Dorsolateral prefrontal cortex (tissue), 120 donors: ENCODE measurements at regions of chr1 and their contacts with region 1.

Region 1: GRCh38 chr1:116139592-116140134 is 28.5 kb downstream of the MAB21L3 start:
- DNase-seq: no peak
- H3K4me3 ChIP-seq: peak overlapping the region in 8 of 59 donors; percentile 13 to 61 (median 40)
- H3K27ac ChIP-seq: peak overlapping the region in 8 of 59 donors; percentile 18 to 79 (median 53)
- H3K27me3 ChIP-seq: no peaks in the 10 kb centered on the region
- CTCF ChIP-seq: no peak

Region 2: DNA sequence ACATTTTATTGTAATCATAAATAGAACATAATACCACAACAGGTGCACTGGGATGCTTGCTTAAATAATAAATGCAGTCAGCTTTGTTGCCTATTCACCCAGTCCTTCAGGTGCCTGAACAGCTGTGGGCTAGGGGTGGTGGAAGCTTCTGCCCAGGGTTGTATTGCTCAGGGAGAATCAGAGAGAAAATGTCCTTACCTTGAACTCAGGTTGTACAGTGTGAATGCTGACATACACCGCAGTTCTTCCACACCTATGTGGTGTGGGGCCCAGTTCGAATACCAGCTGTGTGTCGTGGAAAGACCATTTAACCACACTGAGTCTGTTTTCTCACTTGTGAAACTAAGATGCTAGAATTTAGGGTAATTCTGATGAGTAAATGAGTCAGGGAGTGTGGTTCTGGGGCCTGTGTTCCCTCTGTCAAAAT is 117.7 kb after region 1 on chr1:
- intact Hi-C with region 1: no loop called
- DNase-seq: no peak
- H3K4me3 ChIP-seq: no peak overlapping the region
- H3K27ac ChIP-seq: no peak overlapping the region
- H3K27me3 ChIP-seq: no peaks in the 10 kb centered on the region
- CTCF ChIP-seq: no peak

Region 3: DNA sequence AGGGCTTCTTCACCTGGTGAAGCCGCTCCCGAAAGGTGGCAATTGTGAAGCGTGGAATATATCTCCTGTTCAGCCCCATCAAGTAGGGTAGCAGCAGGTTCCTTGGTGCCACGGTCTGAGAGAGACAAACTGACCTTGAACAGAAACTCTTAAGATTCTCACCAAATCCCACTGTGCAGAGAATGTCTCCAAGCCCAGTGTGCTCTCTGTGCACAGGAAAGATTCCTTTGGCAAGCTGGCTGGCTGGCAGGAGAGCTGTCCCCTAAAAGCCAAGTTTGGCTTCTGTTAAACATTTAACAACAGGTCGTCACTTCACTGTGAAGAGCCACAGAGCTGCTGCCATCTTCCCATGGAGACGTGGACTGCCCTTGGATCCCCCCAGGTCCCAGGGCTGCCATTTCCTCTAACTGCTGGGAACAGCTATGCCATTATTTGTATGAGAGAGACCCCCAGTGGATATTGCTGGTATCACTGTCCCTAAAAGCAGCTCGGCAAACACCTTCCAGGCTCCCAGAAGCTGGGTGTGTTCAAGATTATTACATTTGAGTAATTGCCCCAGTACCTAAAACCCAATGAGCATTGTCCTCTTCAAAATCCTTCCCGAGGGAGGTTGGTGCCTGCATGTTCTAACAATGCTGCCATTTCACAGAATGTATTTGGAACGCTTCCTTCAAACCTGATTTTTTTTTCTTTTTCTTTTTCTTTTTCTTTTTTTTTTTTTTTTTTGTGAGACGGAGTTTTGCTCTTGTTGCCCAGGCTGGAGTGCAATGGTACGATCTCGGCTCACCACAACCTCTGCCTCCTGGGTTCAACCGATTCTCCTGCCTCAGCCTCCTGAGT is 359.3 kb after region 1 on chr1:
- intact Hi-C with region 1: loop called (anchors 1 to 5 kb)
- DNase-seq: peak in 4 of 10 donors; percentile 36 to 70 (median 58)
- H3K4me3 ChIP-seq: peak overlapping the region in 1 of 59 donors; percentile 20
- H3K27ac ChIP-seq: no peak overlapping the region
- H3K27me3 ChIP-seq: no peaks in the 10 kb centered on the region
- CTCF ChIP-seq: peak in 55 of 56 donors; percentile 73 to 96 (median 88)